OCI-LY7 (cell line): ENCODE measurements at regions of chr1 and their contacts with region 1.

Region 1: GRCh38 chr1:224851210-224851847 is 78.1 kb upstream of the DNAH14 start:
- DNase-seq: peak; percentile 71
- H3K4me3 ChIP-seq: no peak overlapping the region
- H3K27ac ChIP-seq: no peak overlapping the region
- H3K4me1 ChIP-seq: peaks cover 10% of the 10 kb centered on the region
- CTCF ChIP-seq: peak; percentile 88

Region 2: GRCh38 chr1:224592636-224593582 is 258.4 kb before region 1 on chr1:
- CTCF ChIA-PET with region 1: no interaction called
- POLR2A ChIA-PET with region 1: no interaction called
- intact Hi-C with region 1: no loop called
- DNase-seq: peak; percentile 40
- H3K4me3 ChIP-seq: no peak overlapping the region
- H3K27ac ChIP-seq: no peak overlapping the region
- H3K4me1 ChIP-seq: peaks cover 14% of the 10 kb centered on the region
- CTCF ChIP-seq: no peak

Region 3: DNA sequence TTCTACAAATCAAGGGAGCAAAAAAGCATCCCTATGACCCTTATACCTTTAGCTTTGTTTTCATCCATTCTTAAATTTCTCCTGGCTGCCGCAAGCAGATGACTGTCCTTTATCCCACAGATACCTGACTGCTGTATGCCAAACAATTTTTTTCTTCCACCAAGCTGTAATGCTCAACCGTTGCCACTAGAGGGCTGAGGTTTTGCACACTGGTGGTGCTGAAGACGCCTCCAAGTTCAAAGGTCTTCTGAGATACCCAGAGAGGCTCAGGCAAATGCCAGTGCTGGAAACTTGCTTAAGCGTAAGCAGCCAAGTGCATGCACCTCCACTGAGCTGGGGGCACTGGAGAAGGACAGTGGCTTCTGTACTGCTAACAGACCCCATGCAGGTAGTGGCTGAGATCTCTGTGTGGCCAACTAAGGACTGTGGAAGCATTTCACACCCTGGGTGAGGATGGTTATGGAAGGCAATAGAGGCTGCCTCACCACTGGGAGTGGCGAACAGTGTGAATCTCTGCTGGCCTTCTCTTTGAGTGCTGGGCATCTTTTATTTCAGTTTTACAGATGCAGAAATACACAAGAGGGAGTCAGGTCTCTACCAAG is 206.7 kb before region 1 on chr1:
- CTCF ChIA-PET with region 1: no interaction called
- POLR2A ChIA-PET with region 1: no interaction called
- intact Hi-C with region 1: loop called (anchors 1 kb)
- DNase-seq: peak; percentile 64
- H3K4me3 ChIP-seq: no peak overlapping the region
- H3K27ac ChIP-seq: no peak overlapping the region
- H3K4me1 ChIP-seq: no peaks in the 10 kb centered on the region
- CTCF ChIP-seq: peak; percentile 92

Region 4: DNA sequence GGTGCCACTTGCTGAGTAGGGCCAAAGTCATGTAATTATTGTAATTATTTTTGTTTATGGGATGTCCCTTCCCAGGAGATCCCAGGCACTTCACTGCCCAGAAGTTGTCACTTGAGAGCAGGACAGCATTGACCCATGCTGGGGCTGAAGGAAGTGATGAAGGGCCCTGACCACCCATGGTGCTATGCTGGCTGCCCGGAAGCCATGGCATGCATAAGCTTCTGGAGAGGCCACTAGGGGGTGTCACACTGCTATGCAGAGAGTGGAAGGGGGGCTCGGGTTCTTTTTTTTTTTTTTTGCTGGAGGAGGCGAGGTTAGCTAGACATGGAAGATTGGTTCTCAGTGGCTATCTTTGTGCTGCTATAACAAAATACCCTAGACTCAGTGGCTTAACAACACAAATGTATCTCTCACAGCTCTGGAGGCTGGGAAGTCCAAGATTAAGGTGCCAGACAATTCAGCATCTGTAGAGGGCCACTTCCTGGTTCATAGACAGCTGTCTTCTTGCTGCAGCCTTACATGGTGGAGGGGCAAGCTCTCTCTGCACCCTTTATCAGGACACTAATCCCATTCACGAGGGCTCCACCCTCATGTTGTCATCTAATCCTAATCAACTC is 150.3 kb before region 1 on chr1:
- CTCF ChIA-PET with region 1: interaction called, 14 read pairs
- POLR2A ChIA-PET with region 1: interaction called, 3 read pairs
- intact Hi-C with region 1: loop called (anchors 1 kb)
- DNase-seq: peak; percentile 68
- H3K4me3 ChIP-seq: no peak overlapping the region
- H3K27ac ChIP-seq: no peak overlapping the region
- H3K4me1 ChIP-seq: no peaks in the 10 kb centered on the region
- CTCF ChIP-seq: peak; percentile 85

Region 5: DNA sequence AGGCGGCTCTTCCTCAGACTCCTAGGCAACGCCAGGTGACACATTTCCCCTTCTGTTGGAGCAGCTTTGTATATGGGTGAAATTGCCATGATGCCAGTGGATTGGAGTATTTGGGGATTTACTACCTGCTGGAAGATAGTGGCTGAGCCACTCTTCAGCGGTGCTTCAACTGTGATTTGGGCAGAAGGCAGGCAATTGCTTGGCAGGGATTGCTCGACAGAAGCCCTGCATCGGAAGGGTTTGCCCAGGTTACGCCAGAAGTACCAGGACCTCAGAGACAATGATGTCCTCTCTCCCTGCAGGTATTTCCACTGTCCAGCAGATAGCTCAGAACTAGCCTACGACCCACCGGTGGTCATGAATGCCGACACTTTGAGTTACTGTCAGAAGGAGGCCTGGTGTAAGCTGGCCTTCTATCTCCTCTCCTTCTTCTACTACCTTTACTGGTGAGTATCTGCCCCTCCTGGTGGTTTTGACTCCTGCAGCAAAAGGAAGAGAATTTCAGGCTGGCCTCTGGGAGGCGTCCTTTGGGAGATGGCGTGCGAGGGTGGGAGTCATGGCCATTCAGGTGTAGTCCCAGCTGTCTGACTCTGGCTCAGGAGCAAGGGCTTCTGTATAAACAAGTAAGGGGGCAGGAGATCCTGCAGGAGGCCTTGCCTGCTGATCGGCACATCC is 116.9 kb before region 1 on chr1:
- CTCF ChIA-PET with region 1: no interaction called
- POLR2A ChIA-PET with region 1: no interaction called
- intact Hi-C with region 1: no loop called
- DNase-seq: no peak
- H3K4me3 ChIP-seq: no peak overlapping the region
- H3K27ac ChIP-seq: no peak overlapping the region
- H3K4me1 ChIP-seq: no peaks in the 10 kb centered on the region
- CTCF ChIP-seq: no peak